ENCODE measurements at regions of chr12 and their contacts with region 1.

Region 1: GRCh38 chr12:46209914-46210872 is 58.6 kb downstream of the SLC38A1 start:
- DNase-seq: peak in 13 of 14 experiments; percentile 30 to 82 (median 60)
- ATAC-seq: peak; percentile 68
- H3K4me3 ChIP-seq: no peak overlapping the region
- H3K4me3 Mint-ChIP-seq: peak overlapping the region; percentile 36
- H3K27ac ChIP-seq: peak overlapping the region; percentile 69 to 82
- H3K27ac Mint-ChIP-seq: peak overlapping the region; percentile 96
- H3K4me1 ChIP-seq: peaks cover 45% of the 10 kb centered on the region
- H3K4me1 Mint-ChIP-seq: peaks cover 99% of the 10 kb centered on the region
- H3K27me3 ChIP-seq: no peaks in the 10 kb centered on the region
- H3K27me3 Mint-ChIP-seq: no peaks in the 10 kb centered on the region
- CTCF ChIP-seq: no peak

Region 2: GRCh38 chr12:45388545-45388944 is 821.6 kb before region 1 on chr12:
- CTCF ChIA-PET with region 1: no interaction called
- POLR2A ChIA-PET with region 1: no interaction called
- intact Hi-C with region 1: no loop called
- DNase-seq: peak in 4 of 14 experiments; percentile 17 to 27 (median 21)
- ATAC-seq: no peak
- H3K4me3 ChIP-seq: no peak overlapping the region
- H3K4me3 Mint-ChIP-seq: no peak overlapping the region
- H3K27ac ChIP-seq: no peak overlapping the region
- H3K27ac Mint-ChIP-seq: no peak overlapping the region
- H3K4me1 ChIP-seq: no peaks in the 10 kb centered on the region
- H3K4me1 Mint-ChIP-seq: no peaks in the 10 kb centered on the region
- H3K27me3 ChIP-seq: no peaks in the 10 kb centered on the region
- H3K27me3 Mint-ChIP-seq: no peaks in the 10 kb centered on the region
- CTCF ChIP-seq: peak; percentile 16

Region 3: DNA sequence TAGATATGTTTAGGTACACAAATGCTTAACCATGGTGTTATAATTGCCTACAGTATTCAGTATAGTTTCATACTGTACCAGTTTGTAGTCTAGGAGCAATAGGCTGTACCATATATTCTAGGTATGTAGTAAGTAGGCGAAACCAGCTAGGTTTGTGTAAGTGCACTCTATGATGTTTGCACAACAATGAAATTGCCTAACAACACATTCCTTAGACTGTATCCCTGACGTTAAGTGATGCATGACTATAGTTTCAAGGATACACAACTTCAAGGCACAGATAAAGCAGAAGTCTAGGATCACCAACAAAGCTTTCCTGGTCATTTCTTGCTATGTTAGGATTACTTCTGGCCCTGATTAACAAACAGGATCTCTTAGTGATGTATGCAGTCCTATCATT is 76.4 kb before region 1 on chr12:
- CTCF ChIA-PET with region 1: no interaction called
- POLR2A ChIA-PET with region 1: no interaction called
- intact Hi-C with region 1: no loop called
- DNase-seq: no peak
- ATAC-seq: no peak
- H3K4me3 ChIP-seq: no peak overlapping the region
- H3K4me3 Mint-ChIP-seq: no peak overlapping the region
- H3K27ac ChIP-seq: no peak overlapping the region
- H3K27ac Mint-ChIP-seq: no peak overlapping the region
- H3K4me1 ChIP-seq: no peaks in the 10 kb centered on the region
- H3K4me1 Mint-ChIP-seq: no peaks in the 10 kb centered on the region
- H3K27me3 ChIP-seq: no peaks in the 10 kb centered on the region
- H3K27me3 Mint-ChIP-seq: no peaks in the 10 kb centered on the region
- CTCF ChIP-seq: no peak

Region 4: DNA sequence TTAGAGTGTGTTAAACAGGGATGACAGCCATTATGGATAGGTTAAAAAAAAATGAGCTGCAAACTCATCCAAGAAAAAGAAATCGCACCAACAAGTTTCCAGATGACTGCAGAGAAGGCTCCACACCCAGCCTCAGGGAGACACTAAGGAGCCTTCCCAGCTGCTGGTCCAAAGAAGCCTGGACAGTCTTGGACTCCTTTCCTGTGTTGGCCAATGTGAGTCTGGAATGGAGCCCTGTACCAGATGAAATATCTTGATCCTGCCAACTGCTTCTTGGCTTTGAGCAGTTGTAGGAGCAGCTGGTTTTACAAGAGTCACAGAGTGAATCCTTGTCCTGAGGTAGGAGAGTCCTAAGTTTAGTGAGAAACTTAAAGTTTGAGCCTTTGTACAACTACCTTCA is 14.2 kb after region 1 on chr12:
- CTCF ChIA-PET with region 1: interaction called, 6 read pairs
- POLR2A ChIA-PET with region 1: interaction called, 94 read pairs
- intact Hi-C with region 1: loop called in 1 of 2 experiments (anchors 1 kb)
- DNase-seq: no peak
- ATAC-seq: no peak
- H3K4me3 ChIP-seq: no peak overlapping the region
- H3K4me3 Mint-ChIP-seq: no peak overlapping the region
- H3K27ac ChIP-seq: peak overlapping the region in 1 of 2 donors; percentile 50
- H3K27ac Mint-ChIP-seq: peak overlapping the region; percentile 96
- H3K4me1 ChIP-seq: peaks cover 49% of the 10 kb centered on the region
- H3K4me1 Mint-ChIP-seq: peaks cover 96% of the 10 kb centered on the region
- H3K27me3 ChIP-seq: no peaks in the 10 kb centered on the region
- H3K27me3 Mint-ChIP-seq: no peaks in the 10 kb centered on the region
- CTCF ChIP-seq: no peak

Region 5: DNA sequence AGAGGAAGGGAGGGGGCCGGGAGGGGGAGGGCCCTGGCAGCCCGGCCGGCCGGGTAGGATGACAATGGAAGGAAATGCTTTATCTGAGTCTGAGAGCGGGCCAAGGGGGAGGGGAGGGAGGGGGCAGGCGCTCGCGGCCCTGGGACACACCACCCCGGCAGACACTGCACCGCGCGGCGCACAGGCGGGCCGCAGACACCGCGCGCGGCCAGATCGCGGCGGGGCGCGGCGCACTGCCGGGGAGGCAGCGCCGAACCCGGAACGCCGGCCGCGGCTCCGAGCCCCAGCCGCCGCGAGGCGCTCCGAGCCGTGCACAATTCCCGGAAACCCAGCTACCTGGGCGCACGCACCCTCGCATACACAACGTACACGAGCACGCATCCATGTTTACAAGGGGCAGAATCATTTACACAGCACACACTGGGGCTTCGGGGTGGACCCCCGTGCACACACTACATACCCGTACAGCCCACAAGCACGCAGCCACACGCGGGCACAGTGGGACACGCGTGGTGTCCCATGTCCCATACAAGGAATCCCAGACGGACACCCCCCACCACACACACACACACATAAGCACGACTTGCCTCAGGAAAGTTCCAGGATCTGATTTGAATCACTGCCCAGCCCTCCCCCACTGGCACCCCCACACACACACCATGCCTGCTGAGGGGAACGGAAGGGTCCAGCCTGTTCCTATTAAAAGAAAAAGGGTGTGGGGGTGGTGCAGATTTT is 1609.9 kb after region 1 on chr12 and contains the start of gene HDAC7:
- CTCF ChIA-PET with region 1: no interaction called
- POLR2A ChIA-PET with region 1: no interaction called
- intact Hi-C with region 1: loop called in 1 of 2 experiments (anchors 10 kb)
- DNase-seq: peak in 13 of 14 experiments; percentile 62 to 90 (median 78)
- ATAC-seq: peak; percentile 59
- H3K4me3 ChIP-seq: peak within 1 kb of the TSS; percentile 89
- H3K4me3 Mint-ChIP-seq: peak within 1 kb of the TSS; percentile 98
- H3K27ac ChIP-seq: peak within 1 kb of the TSS; percentile 84 to 89
- H3K27ac Mint-ChIP-seq: peak within 1 kb of the TSS; percentile 96
- H3K4me1 ChIP-seq: peaks cover 81% of the 10 kb centered on the region
- H3K4me1 Mint-ChIP-seq: peaks cover 89% of the 10 kb centered on the region
- H3K27me3 ChIP-seq: no peaks in the 10 kb centered on the region
- H3K27me3 Mint-ChIP-seq: no peaks in the 10 kb centered on the region
- CTCF ChIP-seq: no peak
- total RNA-seq, gene HDAC7: 116 to 122 TPM

Measured in CD4-positive, alpha-beta T cell (primary cell).